ENCODE measurements at regions of chr1 and their contacts with region 1.

Region 1: DNA sequence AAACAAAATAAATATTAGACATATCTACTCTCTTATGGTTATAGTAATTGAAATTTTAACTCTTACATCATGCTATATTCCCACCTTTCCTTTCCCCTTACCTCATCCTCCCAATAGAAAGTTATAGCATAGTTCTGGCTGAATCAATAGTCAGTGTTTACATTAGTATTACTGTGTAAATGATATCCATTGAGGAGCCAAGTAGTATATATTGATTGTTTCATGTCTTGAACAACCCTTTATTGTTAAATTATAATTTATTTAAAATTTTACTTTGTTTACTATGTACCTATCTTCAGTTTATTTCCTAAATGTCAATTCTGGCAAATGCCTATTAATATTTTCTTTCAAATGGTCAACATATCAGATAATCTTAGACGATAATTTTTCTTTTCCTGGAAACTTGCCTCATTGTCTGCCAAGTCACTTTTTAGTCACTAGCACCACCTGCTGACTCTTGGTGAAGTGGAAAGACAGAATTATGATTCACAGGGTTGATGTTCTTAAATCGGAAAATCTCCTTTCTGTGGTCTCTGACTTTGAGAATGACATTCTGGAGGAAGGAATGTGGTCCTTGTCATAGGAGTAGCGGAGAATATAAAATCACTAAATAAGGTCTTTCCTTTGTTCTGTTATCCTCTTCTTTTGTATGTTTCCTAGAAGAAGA is 8.7 kb downstream of the HJV start:
- DNase-seq: peak in 22 of 42 donors; percentile 35 to 79 (median 58)

Region 2: GRCh38 chr1:145751491-145752037 is 261.3 kb before region 1 on chr1:
- intact Hi-C with region 1: no loop called
- DNase-seq: peak in 12 of 42 donors; percentile 3 to 64 (median 20)

Region 3: GRCh38 chr1:145891587-145892485 is 121.0 kb before region 1 on chr1:
- intact Hi-C with region 1: loop called (anchors 10 kb)
- DNase-seq: peak; percentile 85 to 97 (median 92)

Region 4: DNA sequence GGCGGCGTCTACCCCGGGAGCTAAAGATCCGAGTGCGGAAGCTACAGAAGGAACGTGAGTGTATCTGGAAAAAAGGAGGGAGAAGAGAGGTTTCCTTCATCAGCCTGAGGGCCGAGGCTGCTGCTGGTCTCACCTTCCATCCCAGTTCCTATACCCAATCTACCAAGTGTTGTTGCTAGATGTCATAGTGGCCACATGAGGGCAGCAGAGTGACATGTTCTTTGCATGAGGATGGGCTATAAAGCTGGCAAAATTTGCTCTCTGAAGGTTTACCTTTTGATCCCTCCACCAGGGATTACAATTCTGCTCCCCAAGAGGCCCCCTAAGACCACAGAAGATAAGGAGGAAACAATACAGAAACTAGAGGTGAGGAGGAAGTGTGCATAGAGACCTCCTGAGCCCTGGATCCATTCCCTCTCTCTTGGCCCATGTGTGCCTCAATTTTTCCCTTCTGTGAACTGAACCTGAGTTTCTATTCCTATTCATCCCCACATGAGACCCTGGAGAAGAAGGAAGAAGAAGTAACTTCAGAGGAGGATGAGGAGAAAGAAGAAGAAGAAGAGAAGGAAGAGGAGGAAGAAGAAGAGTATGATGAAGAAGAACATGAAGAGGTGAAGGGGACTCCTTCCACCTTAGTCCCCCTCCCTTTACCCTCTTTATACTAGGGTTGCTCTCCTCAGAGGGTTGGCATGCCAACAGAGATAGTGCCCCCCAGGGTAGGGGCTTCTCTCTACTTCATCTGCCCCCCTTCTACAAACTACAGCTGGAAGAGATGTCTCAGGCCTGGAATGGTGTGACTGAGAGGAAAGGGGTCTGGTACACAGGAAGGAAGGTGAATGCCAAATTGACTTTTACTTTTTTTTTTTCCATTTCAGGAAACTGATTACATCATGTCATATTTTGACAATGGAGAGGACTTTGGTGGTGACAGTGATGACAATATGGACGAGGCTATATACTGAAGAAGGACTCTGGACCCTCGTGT is 35.1 kb before region 1 on chr1:
- intact Hi-C with region 1: loop called (anchors 2 kb)
- DNase-seq: peak in 41 of 42 donors; percentile 28 to 92 (median 79)